Mammary epithelial cell (primary cell): ENCODE measurements at regions of chr1 and their contacts with region 1.

Region 1: GRCh38 chr1:181424786-181425403 is 58.4 kb upstream of the CACNA1E start:
- DNase-seq: peak; percentile 42
- H3K4me3 ChIP-seq: no peak overlapping the region
- H3K27ac ChIP-seq: no peak overlapping the region
- H3K4me1 ChIP-seq: no peaks in the 10 kb centered on the region
- H3K27me3 ChIP-seq: no peaks in the 10 kb centered on the region
- CTCF ChIP-seq: peak; percentile 97 to 99

Region 2: GRCh38 chr1:180881806-180882509 is 542.9 kb before region 1 on chr1:
- CTCF ChIA-PET with region 1: no interaction called
- dilution Hi-C with region 1: no loop called
- in situ Hi-C with region 1: no loop called
- intact Hi-C with region 1: loop called (anchors 10 kb)
- DNase-seq: peak; percentile 16
- H3K4me3 ChIP-seq: no peak overlapping the region
- H3K27ac ChIP-seq: no peak overlapping the region
- H3K4me1 ChIP-seq: no peaks in the 10 kb centered on the region
- H3K27me3 ChIP-seq: no peaks in the 10 kb centered on the region
- CTCF ChIP-seq: peak; percentile 33 to 44

Region 3: GRCh38 chr1:181189691-181190363 is 235.1 kb before region 1 on chr1:
- CTCF ChIA-PET with region 1: interaction called, 3 read pairs
- dilution Hi-C with region 1: no loop called
- in situ Hi-C with region 1: loop called (anchors 5 kb)
- intact Hi-C with region 1: loop called (anchors 1 kb)
- DNase-seq: peak; percentile 44
- H3K4me3 ChIP-seq: peak overlapping the region in 2 of 3 experiments; percentile 6 to 14
- H3K27ac ChIP-seq: no peak overlapping the region
- H3K4me1 ChIP-seq: peaks cover 5% of the 10 kb centered on the region
- H3K27me3 ChIP-seq: no peaks in the 10 kb centered on the region
- CTCF ChIP-seq: peak; percentile 79 to 95

Region 4: DNA sequence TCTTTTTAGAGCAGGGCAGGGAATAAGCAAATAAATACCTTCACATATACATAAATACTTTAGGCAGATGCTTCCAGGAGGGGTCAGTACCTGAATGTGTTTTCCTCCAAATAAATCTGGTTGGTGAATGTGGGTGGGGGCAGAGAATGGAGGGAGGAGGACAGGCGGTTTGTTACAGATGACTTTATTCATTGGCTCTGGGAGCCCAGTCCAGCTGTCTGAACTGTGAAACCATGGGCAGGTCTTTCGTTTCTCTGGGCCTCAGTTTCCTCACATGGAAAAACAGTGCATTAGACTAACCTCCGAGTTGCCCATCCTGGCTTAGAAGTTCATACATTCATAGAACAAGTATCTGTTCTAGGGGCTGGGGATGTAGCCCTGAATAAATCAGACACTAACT is 211.8 kb before region 1 on chr1:
- CTCF ChIA-PET with region 1: no interaction called
- dilution Hi-C with region 1: loop called (anchors 25 kb)
- in situ Hi-C with region 1: no loop called
- intact Hi-C with region 1: loop called (anchors 1 kb)
- DNase-seq: no peak
- H3K4me3 ChIP-seq: no peak overlapping the region
- H3K27ac ChIP-seq: no peak overlapping the region
- H3K4me1 ChIP-seq: no peaks in the 10 kb centered on the region
- H3K27me3 ChIP-seq: peaks cover 1% of the 10 kb centered on the region
- CTCF ChIP-seq: no peak

Region 5: DNA sequence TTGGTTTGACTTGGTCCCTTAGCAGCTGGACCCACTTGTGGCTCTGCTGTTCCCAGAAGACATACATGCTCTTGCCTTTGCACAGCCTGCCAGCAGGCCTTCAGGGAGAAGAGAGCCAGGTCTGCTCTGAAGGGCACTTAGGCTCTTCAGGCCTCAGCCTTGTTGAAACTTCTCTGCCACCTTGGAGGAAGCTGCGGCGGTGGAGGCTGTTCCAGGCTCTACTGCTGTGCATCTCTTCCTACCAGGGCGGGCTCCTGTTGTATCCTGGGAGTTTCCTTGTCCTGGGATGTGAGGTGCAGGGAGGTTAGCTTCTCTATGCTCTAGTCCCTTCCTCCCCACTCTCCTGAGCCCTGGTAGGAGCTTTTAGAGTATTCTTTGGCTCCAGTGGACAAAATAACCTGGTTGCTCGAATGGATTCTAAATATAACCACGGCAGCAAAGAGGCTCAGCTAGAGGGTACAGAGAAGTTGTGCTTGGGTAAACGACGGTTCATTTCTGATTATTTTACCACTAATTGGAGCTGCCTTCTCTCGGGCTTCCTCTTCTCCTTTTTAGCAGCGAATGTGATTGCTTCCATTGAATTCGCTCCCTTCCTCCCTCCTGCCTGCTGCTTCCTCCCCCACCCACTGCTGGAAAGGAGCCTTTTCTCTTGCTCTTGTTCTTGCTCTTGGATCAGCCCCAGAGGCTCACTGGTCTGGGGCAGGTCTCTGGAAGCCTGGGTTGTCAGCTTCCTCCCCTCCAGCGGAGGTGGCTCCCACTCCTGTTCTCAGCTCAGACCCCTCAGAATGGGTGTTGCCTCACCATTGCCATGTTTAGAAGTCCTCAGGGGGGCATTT is 68.2 kb before region 1 on chr1:
- CTCF ChIA-PET with region 1: no interaction called
- dilution Hi-C with region 1: no loop called
- in situ Hi-C with region 1: no loop called
- intact Hi-C with region 1: no loop called
- DNase-seq: no peak
- H3K4me3 ChIP-seq: no peak overlapping the region
- H3K27ac ChIP-seq: no peak overlapping the region
- H3K4me1 ChIP-seq: no peaks in the 10 kb centered on the region
- H3K27me3 ChIP-seq: peaks cover 2% of the 10 kb centered on the region
- CTCF ChIP-seq: no peak

Region 6: GRCh38 chr1:181936768-181937581 is 512.1 kb after region 1 on chr1:
- CTCF ChIA-PET with region 1: no interaction called
- dilution Hi-C with region 1: no loop called
- in situ Hi-C with region 1: no loop called
- intact Hi-C with region 1: loop called (anchors 2 kb)
- DNase-seq: peak; percentile 63
- H3K4me3 ChIP-seq: no peak overlapping the region
- H3K27ac ChIP-seq: no peak overlapping the region
- H3K4me1 ChIP-seq: no peaks in the 10 kb centered on the region
- H3K27me3 ChIP-seq: peaks cover 2% of the 10 kb centered on the region
- CTCF ChIP-seq: peak; percentile 78 to 84

Region 7: GRCh38 chr1:182229921-182230491 is 805.1 kb after region 1 on chr1:
- CTCF ChIA-PET with region 1: no interaction called
- dilution Hi-C with region 1: no loop called
- in situ Hi-C with region 1: no loop called
- intact Hi-C with region 1: no loop called
- DNase-seq: no peak
- H3K4me3 ChIP-seq: no peak overlapping the region
- H3K27ac ChIP-seq: no peak overlapping the region
- H3K4me1 ChIP-seq: no peaks in the 10 kb centered on the region
- H3K27me3 ChIP-seq: no peaks in the 10 kb centered on the region
- CTCF ChIP-seq: no peak